ENCODE measurements at regions of chr20 and their contacts with region 1.

Region 1: DNA sequence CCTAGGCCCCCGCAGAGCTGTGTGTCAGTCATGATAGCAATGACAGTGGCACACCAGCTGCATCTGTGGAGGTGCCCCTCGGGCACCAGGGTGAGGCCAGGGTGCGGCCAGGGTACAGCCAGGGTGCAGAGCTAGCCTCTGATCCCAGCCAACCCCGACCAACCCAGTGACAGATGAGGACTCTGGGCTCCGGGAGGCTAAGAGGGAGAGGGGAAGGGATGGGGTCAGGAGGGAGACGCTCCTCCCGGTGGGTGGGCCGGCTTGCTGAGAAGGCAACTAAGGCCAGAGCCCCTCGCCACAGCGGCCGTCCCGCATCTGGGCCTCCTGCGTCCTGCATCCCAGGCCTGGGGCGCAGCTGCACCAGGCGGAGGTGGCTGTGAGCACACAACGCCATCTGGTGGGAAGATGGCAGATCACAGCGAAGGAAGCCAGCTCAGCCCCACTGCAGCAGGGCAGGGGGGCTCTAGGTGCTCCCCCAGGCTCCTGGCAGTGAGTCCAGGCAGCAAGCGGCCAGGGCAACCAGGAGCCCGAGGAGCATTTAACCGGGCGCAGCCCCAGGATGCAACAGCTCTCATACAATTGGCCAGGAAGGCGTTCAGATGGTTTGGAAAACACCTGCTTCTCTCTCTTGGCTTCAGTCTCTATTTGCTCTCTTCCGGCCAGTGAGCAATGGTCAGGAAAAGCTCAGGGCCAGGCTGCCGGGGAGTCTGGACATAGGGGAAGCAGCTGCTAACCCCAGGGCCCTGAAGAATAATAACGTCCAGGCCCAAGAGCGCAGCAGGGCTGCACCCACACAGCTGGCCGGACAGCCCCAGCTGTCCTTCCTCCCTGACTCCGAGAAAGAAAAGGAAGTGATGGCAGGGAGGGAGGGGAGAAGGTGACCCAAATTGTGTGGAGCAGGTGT is 169.4 kb downstream of the TAF4 start:
- DNase-seq: peak; percentile 67
- CTCF ChIP-seq: peak; percentile 91

Region 2: DNA sequence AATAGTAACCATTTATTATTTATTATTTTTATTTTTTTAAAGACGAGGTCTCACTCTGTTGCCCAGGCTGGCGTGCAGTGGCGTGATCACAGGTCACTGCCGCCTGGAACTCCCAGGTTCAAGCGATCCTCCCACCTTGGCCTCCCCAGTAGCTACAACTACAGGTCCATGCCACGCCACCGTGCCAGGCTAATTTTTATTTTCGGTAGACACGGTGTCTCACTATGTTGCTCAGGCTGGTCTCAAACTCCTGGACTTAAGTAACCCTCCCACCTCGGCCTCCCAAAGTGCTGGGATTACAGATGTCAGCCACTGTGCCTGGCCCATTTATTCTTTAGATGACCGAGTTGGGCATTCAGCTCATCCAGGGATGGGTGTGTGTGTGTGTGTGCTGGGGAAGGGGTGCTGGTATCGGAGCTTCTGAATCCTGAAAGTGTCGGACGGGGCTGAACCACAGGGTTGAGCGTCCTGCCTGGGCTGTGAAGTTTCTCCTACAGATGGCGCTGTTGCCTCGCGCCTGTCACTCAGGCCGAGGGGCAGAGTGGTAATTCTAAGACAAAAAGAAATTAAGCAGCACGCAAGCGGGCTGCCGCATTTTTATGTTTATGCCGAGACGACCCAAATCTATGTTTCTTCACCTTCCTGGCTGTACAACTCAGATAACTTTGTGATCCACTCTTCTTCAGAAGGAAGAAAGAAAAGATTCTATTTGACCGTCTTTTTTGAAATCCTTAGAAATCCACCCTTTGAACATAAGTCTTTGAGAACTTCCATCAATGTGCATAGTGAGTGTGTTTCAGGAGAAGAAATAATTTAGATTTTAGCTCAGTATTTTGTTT is 1685.3 kb before region 1 on chr20:
- CTCF ChIA-PET with region 1: interaction called, 14 read pairs
- POLR2A ChIA-PET with region 1: no interaction called
- DNase-seq: peak; percentile 64
- CTCF ChIP-seq: peak; percentile 72

Region 3: GRCh38 chr20:61912665-61913422 is 16.5 kb after region 1 on chr20:
- CTCF ChIA-PET with region 1: interaction called, 10 read pairs
- POLR2A ChIA-PET with region 1: no interaction called
- DNase-seq: peak; percentile 47
- CTCF ChIP-seq: no peak

Region 4: DNA sequence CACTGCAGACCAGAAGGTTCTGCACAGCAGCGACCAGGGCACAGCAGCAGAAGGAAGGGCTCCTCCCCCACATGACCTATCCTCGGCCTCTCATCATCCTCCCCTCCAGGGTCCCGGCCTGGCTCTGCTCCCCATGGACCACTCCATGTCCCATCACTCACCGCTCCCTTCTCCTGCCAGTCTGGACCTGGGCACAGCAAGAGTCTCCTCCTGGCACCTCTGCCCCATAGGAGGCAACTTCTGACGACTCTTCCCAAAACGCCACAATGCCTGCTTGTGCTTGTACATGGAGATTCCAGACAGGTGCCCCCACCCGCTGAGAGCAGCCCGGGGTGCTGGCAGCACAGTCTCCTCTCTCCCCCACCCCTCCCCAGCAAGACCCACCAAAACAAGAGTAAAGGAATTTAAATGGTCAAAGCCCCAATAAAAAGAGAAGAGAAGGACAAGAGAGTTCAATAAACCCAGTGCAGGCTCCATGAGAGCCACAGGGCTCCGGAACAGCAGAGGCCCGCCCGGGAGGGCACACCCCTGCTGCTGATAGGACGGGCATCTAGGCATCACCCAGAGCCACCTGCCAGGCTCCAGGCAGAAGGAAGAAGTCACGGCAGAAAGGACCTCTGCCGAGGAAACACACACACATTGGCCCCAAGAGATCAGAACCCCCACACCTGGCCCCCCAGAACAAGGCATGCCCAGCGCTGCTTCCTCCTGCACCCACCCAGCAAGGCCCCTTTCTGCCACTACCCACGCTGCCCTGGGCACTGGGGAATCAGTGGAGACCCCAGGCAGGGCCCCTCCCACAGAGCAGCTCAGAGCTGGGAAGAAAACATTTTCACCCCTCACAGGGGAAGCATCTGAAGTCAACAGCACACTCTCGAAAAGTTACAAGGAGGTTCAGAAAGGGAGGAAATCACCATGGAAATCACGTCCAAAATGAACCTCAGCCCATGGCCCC is 154.1 kb after region 1 on chr20:
- CTCF ChIA-PET with region 1: no interaction called
- POLR2A ChIA-PET with region 1: no interaction called
- DNase-seq: no peak
- CTCF ChIP-seq: no peak

Measured in GM10248 (cell line).